GM12878 (cell line): ENCODE measurements at regions of chr5 and their contacts with region 1.

Region 1: DNA sequence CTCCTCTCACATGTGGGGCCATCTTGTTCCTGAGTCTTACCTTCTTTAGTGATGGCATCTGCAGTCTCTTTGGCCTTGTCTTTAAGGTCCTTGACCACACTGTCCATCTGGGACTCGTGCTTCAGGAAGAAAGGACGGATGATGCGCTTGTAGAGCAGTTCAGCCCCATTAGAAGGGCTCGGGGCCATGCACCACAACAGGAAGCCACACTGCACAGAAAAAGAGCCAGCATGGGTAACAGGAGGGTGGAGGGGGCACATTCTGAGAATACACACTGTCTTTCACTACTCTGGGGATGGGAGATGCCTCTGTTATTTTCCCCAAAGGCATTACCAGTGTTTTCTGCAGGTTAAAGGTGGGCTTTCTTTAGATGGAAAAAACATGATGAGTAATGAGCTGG is 25.9 kb downstream of the SRP19 start:
- DNase-seq: no peak
- ATAC-seq: no peak
- H3K4me3 ChIP-seq: no peak overlapping the region
- H3K27ac ChIP-seq: no peak overlapping the region
- H3K4me1 ChIP-seq: no peaks in the 10 kb centered on the region
- H3K27me3 ChIP-seq: no peaks in the 10 kb centered on the region
- CTCF ChIP-seq: no peak
- EP300 ChIP-seq: no peak
- POLR2A ChIP-seq: no peak
- RAD21 ChIP-seq: no peak

Region 2: GRCh38 chr5:112907166-112907631 is 20.2 kb after region 1 on chr5:
- CTCF ChIA-PET with region 1: interaction called, 4 read pairs
- POLR2A ChIA-PET with region 1: interaction called, 4 read pairs
- RAD21 ChIA-PET with region 1: no interaction called
- SMC1A ChIA-PET with region 1: interaction called, 29 read pairs
- in situ Hi-C with region 1: no loop called
- intact Hi-C with region 1: no loop called
- DNase-seq: no peak
- ATAC-seq: peak; percentile 64
- H3K4me3 ChIP-seq: no peak overlapping the region
- H3K27ac ChIP-seq: no peak overlapping the region; the same call in 1 of the 2 replicates
- H3K4me1 ChIP-seq: peaks cover 4% of the 10 kb centered on the region; the same call in 1 of the 2 replicates
- H3K27me3 ChIP-seq: no peaks in the 10 kb centered on the region
- CTCF ChIP-seq: no peak
- EP300 ChIP-seq: no peak
- POLR2A ChIP-seq: no peak
- RAD21 ChIP-seq: no peak